ENCODE measurements at regions of chr2 and their contacts with region 1.

Region 1: DNA sequence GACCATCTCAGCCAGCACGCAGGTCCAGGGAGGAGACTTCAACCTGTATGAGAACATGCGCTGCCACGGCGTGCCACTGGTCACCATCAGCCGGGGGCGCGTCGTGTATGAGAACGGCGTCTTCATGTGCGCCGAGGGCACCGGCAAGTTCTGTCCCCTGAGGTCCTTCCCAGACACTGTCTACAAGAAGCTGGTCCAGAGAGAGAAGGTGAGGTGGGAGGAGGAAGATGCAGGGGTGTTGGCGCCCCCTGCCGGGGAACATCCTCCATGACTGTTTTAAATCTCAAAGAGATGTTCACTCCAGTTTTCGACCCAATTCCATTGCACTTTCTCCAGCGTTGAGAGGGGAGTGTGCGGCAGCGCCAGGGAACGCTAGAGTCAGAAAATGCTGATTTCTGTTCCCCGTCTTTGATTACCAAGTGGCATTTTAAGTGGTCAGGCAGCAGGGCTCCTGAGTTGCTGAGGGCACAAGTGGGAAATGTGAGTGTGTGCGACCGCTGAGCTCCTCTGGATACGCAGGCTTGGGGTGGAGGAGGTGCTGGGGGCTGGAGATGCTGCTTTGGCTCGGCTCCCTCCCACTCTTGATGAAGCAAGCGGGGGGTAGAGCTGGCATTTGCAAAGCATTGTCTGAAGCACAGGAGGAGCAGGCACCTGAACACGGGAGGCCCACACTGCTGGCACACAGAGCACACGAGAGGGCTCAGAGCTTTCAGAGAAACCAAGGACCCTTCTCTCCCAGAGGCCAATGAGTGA is 27.7 kb upstream of the MAPRE3 start:
- DNase-seq: no peak
- H3K4me3 ChIP-seq: no peak overlapping the region
- H3K27ac ChIP-seq: no peak overlapping the region
- H3K4me1 ChIP-seq: no peaks in the 10 kb centered on the region
- H3K27me3 ChIP-seq: no peaks in the 10 kb centered on the region
- CTCF ChIP-seq: peak; percentile 33 to 52 (median 52)
- POLR2A ChIP-seq: no peak

Region 2: GRCh38 chr2:26816893-26817292 is 125.8 kb before region 1 on chr2:
- intact Hi-C with region 1: no loop called
- DNase-seq: no peak
- H3K4me3 ChIP-seq: no peak overlapping the region
- H3K27ac ChIP-seq: no peak overlapping the region
- H3K4me1 ChIP-seq: no peaks in the 10 kb centered on the region
- H3K27me3 ChIP-seq: no peaks in the 10 kb centered on the region
- CTCF ChIP-seq: no peak
- POLR2A ChIP-seq: no peak

Region 3: DNA sequence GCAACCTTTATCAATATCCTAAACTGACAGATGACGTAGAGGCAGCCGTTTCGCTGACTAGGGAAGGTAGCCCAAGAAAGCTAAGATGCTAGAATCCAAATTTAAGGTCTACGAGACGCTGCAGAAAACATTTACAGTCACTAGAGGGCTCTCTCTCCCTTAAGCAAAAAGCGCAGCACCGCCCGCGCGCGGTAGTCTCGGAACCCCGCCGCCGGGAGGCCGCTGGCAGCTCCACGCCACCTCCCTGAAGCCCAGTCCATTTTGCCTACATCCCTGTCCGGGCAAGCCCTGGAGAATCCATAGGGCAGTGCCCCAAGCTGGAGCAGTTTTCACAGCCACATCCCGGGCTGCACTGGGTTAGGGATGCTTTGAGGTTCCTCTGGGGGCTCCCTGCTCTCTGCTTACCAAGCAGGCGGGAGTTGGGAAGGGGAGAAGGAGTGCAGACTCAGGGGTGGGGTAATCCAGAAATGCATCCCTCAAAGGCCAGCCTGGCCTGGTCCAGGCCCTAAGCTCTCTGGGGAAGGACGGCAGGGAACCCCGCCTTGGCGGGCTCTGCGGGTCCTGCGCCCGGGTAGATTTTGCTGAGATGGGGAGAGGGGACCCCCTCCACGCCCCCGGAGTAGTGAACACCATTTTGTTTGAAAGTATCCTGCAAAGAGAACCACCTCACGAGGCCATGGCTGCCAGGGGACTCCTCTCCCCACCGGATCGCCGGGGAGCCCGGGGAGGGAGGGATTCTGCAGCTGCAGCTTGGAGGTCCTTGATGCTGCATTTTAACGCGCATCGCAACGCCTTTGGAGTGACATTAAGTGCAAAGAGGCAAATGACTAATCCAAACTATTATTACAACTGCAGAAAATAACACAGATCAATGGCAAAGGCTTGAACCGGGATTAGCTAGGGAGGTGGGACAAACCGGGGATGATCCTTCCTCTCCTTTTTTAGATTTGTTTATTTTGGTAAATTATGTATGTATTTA is 96.1 kb before region 1 on chr2:
- intact Hi-C with region 1: loop called (anchors 5 kb)
- DNase-seq: no peak
- H3K4me3 ChIP-seq: peak overlapping the region in 1 of 2 donors; percentile 55
- H3K27ac ChIP-seq: no peak overlapping the region
- H3K4me1 ChIP-seq: peaks cover 38% of the 10 kb centered on the region
- H3K27me3 ChIP-seq: peaks cover 22% of the 10 kb centered on the region
- CTCF ChIP-seq: peak; percentile 27 to 71 (median 41)
- POLR2A ChIP-seq: no peak

Region 4: GRCh38 chr2:26889796-26890195 is 52.9 kb before region 1 on chr2:
- intact Hi-C with region 1: loop called (anchors 2 kb)
- DNase-seq: no peak
- H3K4me3 ChIP-seq: no peak overlapping the region
- H3K27ac ChIP-seq: no peak overlapping the region
- H3K4me1 ChIP-seq: no peaks in the 10 kb centered on the region
- H3K27me3 ChIP-seq: no peaks in the 10 kb centered on the region
- CTCF ChIP-seq: no peak
- POLR2A ChIP-seq: no peak

Region 5: GRCh38 chr2:26982102-26982742 is 39.5 kb after region 1 on chr2:
- intact Hi-C with region 1: no loop called
- DNase-seq: no peak
- H3K4me3 ChIP-seq: no peak overlapping the region
- H3K27ac ChIP-seq: no peak overlapping the region
- H3K4me1 ChIP-seq: peaks cover 18% of the 10 kb centered on the region
- H3K27me3 ChIP-seq: no peaks in the 10 kb centered on the region
- CTCF ChIP-seq: peak in 1 of 3 experiments; percentile 12
- POLR2A ChIP-seq: no peak

Measured in vagina (tissue), 2 donors.